Activated CD8-positive, alpha-beta T cell treated with anti-CD3 and anti-CD28 coated beads for 36 hours (primary cell): ENCODE measurements at regions of chr18 and their contacts with region 1.

Region 1: DNA sequence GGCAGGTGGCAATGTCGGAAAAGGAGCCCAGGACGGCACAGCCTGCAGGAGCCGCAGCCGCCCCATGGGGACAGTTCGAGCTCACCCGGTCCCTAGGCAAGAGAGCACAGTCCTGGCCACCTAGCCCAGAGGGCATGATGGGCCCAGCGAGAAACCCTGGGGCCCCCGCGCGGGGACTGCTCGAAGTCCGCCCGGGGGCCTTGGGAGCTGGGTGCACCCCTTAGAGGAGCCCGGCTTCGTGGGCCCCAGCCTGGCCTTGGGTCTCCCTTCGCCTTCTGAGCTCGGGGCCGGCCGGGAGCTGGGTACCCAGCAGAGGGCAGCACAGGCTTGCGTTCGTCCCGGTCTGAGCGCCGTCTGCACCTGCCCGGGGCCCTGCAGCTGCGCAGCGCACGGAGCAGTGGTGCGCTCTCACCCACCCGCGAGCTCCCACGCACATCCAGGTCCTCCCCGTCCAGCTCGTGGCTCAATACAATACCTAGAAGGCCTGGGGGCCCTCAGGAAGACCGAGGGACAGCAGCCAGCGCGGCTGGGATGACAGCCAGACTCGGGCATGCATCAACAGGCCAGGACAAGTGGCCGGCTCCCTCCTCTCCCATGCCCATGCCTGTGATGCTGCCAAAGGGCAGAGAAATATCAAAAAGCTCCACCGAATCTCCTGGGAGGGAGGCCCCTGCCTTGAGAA is 96.2 kb upstream of the ZNF532 start:
- DNase-seq: peak; percentile 83
- ATAC-seq: peak; percentile 92
- H3K4me3 Mint-ChIP-seq: no peak overlapping the region
- H3K27ac Mint-ChIP-seq: no peak overlapping the region
- H3K4me1 Mint-ChIP-seq: peaks cover 5% of the 10 kb centered on the region
- H3K27me3 Mint-ChIP-seq: peaks cover 42% of the 10 kb centered on the region
- CTCF ChIP-seq: peak; percentile 65

Region 2: DNA sequence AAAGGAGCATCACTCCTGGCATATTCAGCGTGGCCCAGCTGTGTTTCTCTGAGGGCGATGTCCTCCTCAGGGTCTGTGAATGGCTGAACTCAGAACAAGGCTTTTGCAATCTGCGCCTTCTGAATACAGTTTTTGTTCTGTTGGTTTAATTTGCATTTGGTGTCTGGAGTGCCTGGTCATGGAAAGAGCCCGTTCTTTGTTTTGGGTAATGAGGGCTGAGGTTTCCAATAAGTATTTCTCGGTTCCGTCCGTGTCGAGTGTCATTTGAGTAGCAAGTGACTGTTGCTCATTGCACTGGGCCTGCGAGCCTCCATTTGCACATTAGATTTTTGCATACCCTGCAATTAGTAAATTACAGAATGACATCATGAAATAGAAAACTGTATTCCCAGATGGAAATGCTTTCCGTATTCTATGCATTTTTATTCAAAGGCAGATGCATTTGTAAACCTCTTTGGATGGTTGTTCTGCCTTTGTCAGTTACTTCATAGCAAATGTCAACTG is 667.1 kb before region 1 on chr18:
- CTCF ChIA-PET with region 1: no interaction called
- POLR2A ChIA-PET with region 1: no interaction called
- intact Hi-C with region 1: no loop called
- DNase-seq: no peak
- ATAC-seq: no peak
- H3K4me3 Mint-ChIP-seq: no peak overlapping the region
- H3K27ac Mint-ChIP-seq: no peak overlapping the region
- H3K4me1 Mint-ChIP-seq: no peaks in the 10 kb centered on the region
- H3K27me3 Mint-ChIP-seq: peaks cover 6% of the 10 kb centered on the region
- CTCF ChIP-seq: no peak

Region 3: GRCh38 chr18:58501066-58501896 is 267.2 kb before region 1 on chr18:
- CTCF ChIA-PET with region 1: interaction called, 39 read pairs
- POLR2A ChIA-PET with region 1: no interaction called
- intact Hi-C with region 1: no loop called
- DNase-seq: no peak
- ATAC-seq: no peak
- H3K4me3 Mint-ChIP-seq: no peak overlapping the region
- H3K27ac Mint-ChIP-seq: no peak overlapping the region
- H3K4me1 Mint-ChIP-seq: peaks cover 12% of the 10 kb centered on the region
- H3K27me3 Mint-ChIP-seq: peaks cover 2% of the 10 kb centered on the region
- CTCF ChIP-seq: no peak

Region 4: DNA sequence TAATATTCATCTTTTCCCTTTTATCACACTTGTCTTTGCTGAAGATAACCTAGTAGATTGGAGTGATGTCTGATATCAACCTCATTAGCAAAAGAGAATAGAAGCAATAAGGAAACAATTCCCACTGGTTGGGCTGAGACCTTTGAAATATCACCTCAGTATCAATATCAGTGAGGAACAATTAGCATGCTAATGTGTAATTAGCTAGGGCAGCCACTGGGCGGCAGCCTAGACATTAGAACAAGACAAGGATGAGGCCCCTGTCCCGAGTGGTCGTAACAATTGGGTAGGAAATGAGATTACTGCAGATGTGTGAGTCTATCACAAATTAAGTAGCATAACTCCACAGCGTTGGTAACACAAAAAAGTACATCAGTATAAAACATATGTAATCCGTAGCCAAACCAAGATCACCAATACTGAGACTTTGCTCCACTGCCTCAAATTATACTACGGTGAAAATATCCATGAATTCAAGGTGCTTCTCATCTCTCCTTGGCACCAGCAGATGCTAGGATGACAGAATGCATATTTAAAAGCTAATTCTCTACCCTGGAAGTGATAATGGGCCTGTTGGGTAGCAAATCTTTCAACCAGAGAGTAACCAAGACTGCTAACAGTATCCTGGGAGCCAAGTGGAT is 238.6 kb before region 1 on chr18:
- CTCF ChIA-PET with region 1: interaction called, 405 read pairs
- POLR2A ChIA-PET with region 1: interaction called, 5 read pairs
- intact Hi-C with region 1: loop called (anchors 1 kb)
- DNase-seq: peak; percentile 84
- ATAC-seq: peak; percentile 79
- H3K4me3 Mint-ChIP-seq: no peak overlapping the region
- H3K27ac Mint-ChIP-seq: no peak overlapping the region
- H3K4me1 Mint-ChIP-seq: peaks cover 16% of the 10 kb centered on the region
- H3K27me3 Mint-ChIP-seq: peaks cover 16% of the 10 kb centered on the region
- CTCF ChIP-seq: peak; percentile 95

Region 5: DNA sequence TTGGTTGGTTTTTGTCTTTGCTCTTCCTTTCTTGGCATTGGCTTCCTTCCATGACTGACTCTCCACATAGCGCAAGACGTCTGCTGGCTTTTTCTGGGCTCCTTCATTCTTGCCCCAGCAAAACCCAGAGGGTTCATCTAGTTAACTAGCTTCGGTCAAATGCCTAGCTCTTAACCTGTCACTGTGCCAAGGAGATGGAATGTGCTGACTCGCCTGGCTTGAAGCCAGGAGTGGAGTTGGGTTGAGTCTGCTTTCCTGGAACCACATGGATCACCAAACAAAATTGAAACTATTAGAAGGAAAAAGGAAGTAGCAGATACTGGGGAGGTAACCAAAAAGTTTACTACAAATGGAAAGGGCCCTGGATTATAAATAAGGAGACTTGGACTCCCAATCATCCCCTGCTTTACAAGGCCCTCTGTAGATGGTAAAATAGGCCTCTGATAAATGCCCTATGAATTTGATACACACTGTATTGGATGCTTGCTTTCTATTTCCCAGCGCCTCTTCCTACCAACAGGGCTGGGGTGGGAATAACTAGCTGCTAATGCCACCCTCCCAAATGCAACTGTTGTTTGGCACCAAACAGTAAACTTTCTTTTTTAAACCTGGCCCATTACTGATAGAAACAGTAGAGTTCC is 85.9 kb before region 1 on chr18:
- CTCF ChIA-PET with region 1: interaction called, 14 read pairs
- POLR2A ChIA-PET with region 1: no interaction called
- intact Hi-C with region 1: loop called (anchors 10 kb)
- DNase-seq: no peak
- ATAC-seq: no peak
- H3K4me3 Mint-ChIP-seq: no peak overlapping the region
- H3K27ac Mint-ChIP-seq: no peak overlapping the region
- H3K4me1 Mint-ChIP-seq: peaks cover 54% of the 10 kb centered on the region
- H3K27me3 Mint-ChIP-seq: no peaks in the 10 kb centered on the region
- CTCF ChIP-seq: no peak

Region 6: DNA sequence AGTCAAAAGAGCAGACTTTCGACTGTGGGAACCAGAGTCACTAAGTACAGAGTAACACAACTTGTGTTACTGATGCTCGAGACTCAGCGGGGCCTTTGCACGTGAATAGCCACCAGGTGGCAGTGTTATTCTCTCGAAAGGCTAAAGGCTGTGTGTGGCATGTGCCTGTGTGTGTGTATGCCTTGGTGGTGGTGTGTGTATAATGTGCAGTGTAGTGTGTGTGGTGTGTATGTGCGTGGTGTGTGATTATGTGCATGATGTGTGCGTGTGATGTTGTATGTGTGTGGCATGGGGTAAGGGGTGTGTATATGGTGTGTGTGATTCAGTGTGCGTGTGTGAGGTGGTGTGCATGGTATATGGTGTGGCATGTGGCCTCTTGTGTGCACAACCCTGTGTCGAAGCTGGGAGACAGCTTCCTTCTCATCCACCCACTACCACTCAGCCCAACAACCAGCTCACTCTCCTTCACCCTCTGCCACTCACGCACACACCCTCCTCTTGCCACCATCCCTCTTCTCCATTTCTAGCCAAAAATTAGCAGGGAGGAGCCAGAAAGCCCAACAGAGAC is 13.3 kb after region 1 on chr18:
- CTCF ChIA-PET with region 1: interaction called, 53 read pairs
- POLR2A ChIA-PET with region 1: no interaction called
- intact Hi-C with region 1: no loop called
- DNase-seq: peak; percentile 81
- ATAC-seq: peak; percentile 90
- H3K4me3 Mint-ChIP-seq: no peak overlapping the region
- H3K27ac Mint-ChIP-seq: no peak overlapping the region
- H3K4me1 Mint-ChIP-seq: no peaks in the 10 kb centered on the region
- H3K27me3 Mint-ChIP-seq: peaks cover 11% of the 10 kb centered on the region
- CTCF ChIP-seq: peak; percentile 82

Region 7: DNA sequence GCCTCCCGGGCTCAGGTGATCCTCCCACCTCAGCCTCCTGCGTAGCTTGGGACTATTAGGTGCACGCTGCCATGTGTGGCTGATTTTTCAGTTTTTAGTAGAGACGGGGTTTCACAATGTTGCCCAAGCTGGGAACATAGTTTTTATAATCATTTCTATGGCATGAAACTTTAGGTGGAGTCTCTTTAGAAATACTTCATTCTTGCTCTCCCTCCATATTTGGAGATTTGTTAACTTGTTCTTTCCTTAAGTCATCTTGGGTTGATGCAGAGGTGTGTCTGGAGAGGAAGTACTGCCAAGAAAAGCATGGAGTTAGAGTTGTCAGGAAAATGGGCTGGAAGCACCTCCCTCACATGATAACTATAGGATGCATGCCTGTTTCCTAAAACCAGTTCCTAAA is 113.6 kb after region 1 on chr18:
- CTCF ChIA-PET with region 1: no interaction called
- POLR2A ChIA-PET with region 1: no interaction called
- intact Hi-C with region 1: no loop called
- DNase-seq: no peak
- ATAC-seq: no peak
- H3K4me3 Mint-ChIP-seq: no peak overlapping the region
- H3K27ac Mint-ChIP-seq: no peak overlapping the region
- H3K4me1 Mint-ChIP-seq: peaks cover under 1% of the 10 kb centered on the region
- H3K27me3 Mint-ChIP-seq: peaks cover 17% of the 10 kb centered on the region
- CTCF ChIP-seq: no peak